ENCODE measurements at regions of chr6 and their contacts with region 1.

Region 1: GRCh38 chr6:347232-347631 is 44.3 kb upstream of the IRF4 start:
- DNase-seq: no peak
- ATAC-seq: peak; percentile 92
- H3K4me3 Mint-ChIP-seq: peak overlapping the region; percentile 59
- H3K27ac Mint-ChIP-seq: peak overlapping the region; percentile 77
- H3K4me1 Mint-ChIP-seq: peaks cover 68% of the 10 kb centered on the region
- H3K27me3 Mint-ChIP-seq: no peaks in the 10 kb centered on the region
- CTCF ChIP-seq: no peak

Region 2: GRCh38 chr6:317448-318144 is 29.6 kb before region 1 on chr6:
- CTCF ChIA-PET with region 1: no interaction called
- POLR2A ChIA-PET with region 1: no interaction called
- intact Hi-C with region 1: no loop called
- DNase-seq: no peak
- ATAC-seq: peak; percentile 16
- H3K4me3 Mint-ChIP-seq: peak overlapping the region; percentile 50
- H3K27ac Mint-ChIP-seq: peak overlapping the region; percentile 83
- H3K4me1 Mint-ChIP-seq: peaks cover 63% of the 10 kb centered on the region
- H3K27me3 Mint-ChIP-seq: no peaks in the 10 kb centered on the region
- CTCF ChIP-seq: no peak

Region 3: DNA sequence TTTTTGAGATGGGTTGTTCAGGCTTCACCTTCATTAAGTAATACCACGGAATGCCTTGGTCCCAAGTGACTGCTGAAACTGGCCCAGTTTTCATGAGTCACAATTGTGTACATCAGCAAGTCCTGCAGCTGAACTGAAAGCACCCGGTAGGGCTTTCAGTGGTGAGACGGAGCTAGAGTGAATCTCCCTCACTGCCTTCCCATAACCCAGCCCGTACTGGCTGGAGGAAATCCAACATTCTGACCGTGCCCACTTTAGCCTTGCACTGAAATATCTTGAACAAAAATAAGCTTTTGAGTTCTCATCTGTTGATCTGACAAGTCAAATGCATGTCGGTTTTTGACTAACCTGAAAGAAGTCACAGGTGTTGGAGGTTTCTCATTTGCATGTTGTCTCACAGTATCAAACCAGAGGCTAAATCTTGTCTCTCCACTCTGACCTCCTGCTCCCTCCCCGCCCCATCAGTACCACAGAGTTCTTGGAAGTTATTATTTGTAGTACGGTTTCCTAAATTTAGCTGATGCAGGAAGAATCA is 19.0 kb before region 1 on chr6:
- CTCF ChIA-PET with region 1: no interaction called
- POLR2A ChIA-PET with region 1: interaction called, 16 read pairs
- intact Hi-C with region 1: loop called (anchors 2 kb)
- DNase-seq: peak; percentile 20
- ATAC-seq: peak; percentile 90
- H3K4me3 Mint-ChIP-seq: no peak overlapping the region
- H3K27ac Mint-ChIP-seq: no peak overlapping the region
- H3K4me1 Mint-ChIP-seq: peaks cover 8% of the 10 kb centered on the region
- H3K27me3 Mint-ChIP-seq: no peaks in the 10 kb centered on the region
- CTCF ChIP-seq: no peak

Region 4: GRCh38 chr6:946546-946945 is 599.3 kb after region 1 on chr6:
- CTCF ChIA-PET with region 1: no interaction called
- POLR2A ChIA-PET with region 1: no interaction called
- intact Hi-C with region 1: no loop called
- DNase-seq: no peak
- ATAC-seq: no peak
- H3K4me3 Mint-ChIP-seq: no peak overlapping the region
- H3K27ac Mint-ChIP-seq: no peak overlapping the region
- H3K4me1 Mint-ChIP-seq: no peaks in the 10 kb centered on the region
- H3K27me3 Mint-ChIP-seq: no peaks in the 10 kb centered on the region
- CTCF ChIP-seq: no peak